HepG2 (cell line): ENCODE measurements at regions of chr18 and their contacts with region 1.

Region 1: GRCh38 chr18:70491734-70492348 is 203.0 kb downstream of the SOCS6 start:
- DNase-seq: peak; percentile 59
- ATAC-seq: peak; percentile 89
- H3K4me3 ChIP-seq: no peak overlapping the region
- H3K27ac ChIP-seq: no peak overlapping the region
- H3K4me1 ChIP-seq: peaks cover 9% of the 10 kb centered on the region
- H3K27me3 ChIP-seq: peaks cover 0 to 3% of the 10 kb centered on the region in 2 experiments; a peak in 2 of 5 replicates
- CTCF ChIP-seq: peak; percentile 72
- EP300 ChIP-seq: no peak
- POLR2A ChIP-seq: no peak
- RAD21 ChIP-seq: no peak

Region 2: GRCh38 chr18:70273021-70273420 is 218.8 kb before region 1 on chr18:
- CTCF ChIA-PET with region 1: no interaction called
- POLR2A ChIA-PET with region 1: no interaction called
- in situ Hi-C with region 1: no loop called
- intact Hi-C with region 1: no loop called
- DNase-seq: no peak
- ATAC-seq: no peak
- H3K4me3 ChIP-seq: no peak overlapping the region
- H3K27ac ChIP-seq: no peak overlapping the region
- H3K4me1 ChIP-seq: no peaks in the 10 kb centered on the region
- H3K27me3 ChIP-seq: peaks cover 0 to 4% of the 10 kb centered on the region in 2 experiments; a peak in 3 of 5 replicates
- CTCF ChIP-seq: no peak
- EP300 ChIP-seq: no peak
- POLR2A ChIP-seq: no peak
- RAD21 ChIP-seq: no peak

Region 3: DNA sequence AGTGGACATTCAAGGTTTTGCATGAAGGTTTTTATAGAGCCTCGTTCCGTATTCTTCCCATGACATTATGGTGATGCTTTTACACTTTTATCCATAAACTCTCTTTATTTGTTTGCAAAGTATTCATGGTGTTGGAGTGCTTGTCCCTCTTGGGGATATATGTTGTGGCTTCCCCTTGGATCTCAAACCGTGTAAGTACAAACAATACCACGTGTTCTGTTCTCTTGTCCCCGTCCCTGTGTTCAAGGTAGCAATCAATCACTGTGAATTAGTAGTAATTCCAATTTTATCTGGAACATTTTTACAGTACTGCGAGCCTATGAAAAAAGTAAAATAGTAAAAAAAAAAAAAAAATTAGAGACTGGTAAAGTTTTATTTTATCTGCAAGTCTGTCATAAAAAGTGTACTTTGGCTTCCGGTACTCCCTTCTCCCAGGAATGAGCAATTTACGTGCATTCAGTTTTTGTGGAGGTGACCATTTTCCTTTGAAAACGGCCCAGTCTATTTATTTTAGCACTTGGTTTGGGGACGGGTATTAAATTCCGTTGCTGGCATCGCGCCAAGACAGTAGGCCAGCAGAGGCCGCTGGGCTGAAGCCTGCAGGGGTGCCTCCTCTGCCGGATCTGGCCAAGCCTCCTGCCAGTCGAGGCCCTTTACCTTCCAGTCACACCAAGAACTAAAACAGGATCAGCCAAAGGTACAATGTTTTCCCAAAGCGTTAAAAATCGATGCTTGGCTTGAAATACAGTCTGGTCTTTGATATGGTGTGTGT is 27.3 kb before region 1 on chr18:
- CTCF ChIA-PET with region 1: no interaction called
- POLR2A ChIA-PET with region 1: no interaction called
- in situ Hi-C with region 1: no loop called
- intact Hi-C with region 1: loop called (anchors 2 kb)
- DNase-seq: peak; percentile 64
- ATAC-seq: peak; percentile 77
- H3K4me3 ChIP-seq: peak overlapping the region; percentile 34 to 46 (median 43)
- H3K27ac ChIP-seq: no peak overlapping the region
- H3K4me1 ChIP-seq: peaks cover 36% of the 10 kb centered on the region
- H3K27me3 ChIP-seq: no peaks in the 10 kb centered on the region
- CTCF ChIP-seq: peak; percentile 59
- EP300 ChIP-seq: no peak
- POLR2A ChIP-seq: no peak
- RAD21 ChIP-seq: 0 out of 2 replicates have a peak, but pooled peaks have one; percentile 28

Region 4: GRCh38 chr18:70513502-70514171 is 21.8 kb after region 1 on chr18:
- CTCF ChIA-PET with region 1: no interaction called
- POLR2A ChIA-PET with region 1: no interaction called
- in situ Hi-C with region 1: no loop called
- intact Hi-C with region 1: no loop called
- DNase-seq: peak; percentile 7
- ATAC-seq: no peak; the same call in 2 of the 3 replicates
- H3K4me3 ChIP-seq: no peak overlapping the region
- H3K27ac ChIP-seq: no peak overlapping the region
- H3K4me1 ChIP-seq: no peaks in the 10 kb centered on the region
- H3K27me3 ChIP-seq: peaks cover 0 to 5% of the 10 kb centered on the region in 2 experiments; a peak in 1 of 5 replicates
- CTCF ChIP-seq: no peak
- EP300 ChIP-seq: no peak
- POLR2A ChIP-seq: no peak
- RAD21 ChIP-seq: no peak

Region 5: GRCh38 chr18:70578480-70578879 is 86.6 kb after region 1 on chr18:
- CTCF ChIA-PET with region 1: no interaction called
- POLR2A ChIA-PET with region 1: no interaction called
- in situ Hi-C with region 1: no loop called
- intact Hi-C with region 1: loop called (anchors 1 kb)
- DNase-seq: peak; percentile 4
- ATAC-seq: peak; percentile 85
- H3K4me3 ChIP-seq: no peak overlapping the region
- H3K27ac ChIP-seq: no peak overlapping the region
- H3K4me1 ChIP-seq: no peaks in the 10 kb centered on the region
- H3K27me3 ChIP-seq: no peaks in the 10 kb centered on the region
- CTCF ChIP-seq: peak; percentile 56
- EP300 ChIP-seq: no peak
- POLR2A ChIP-seq: no peak
- RAD21 ChIP-seq: no peak

Region 6: GRCh38 chr18:71194438-71194837 is 702.6 kb after region 1 on chr18:
- CTCF ChIA-PET with region 1: no interaction called
- POLR2A ChIA-PET with region 1: no interaction called
- in situ Hi-C with region 1: no loop called
- intact Hi-C with region 1: loop called (anchors 5 kb)
- DNase-seq: no peak
- ATAC-seq: no peak
- H3K4me3 ChIP-seq: no peak overlapping the region
- H3K27ac ChIP-seq: no peak overlapping the region
- H3K4me1 ChIP-seq: no peaks in the 10 kb centered on the region
- H3K27me3 ChIP-seq: no peaks in the 10 kb centered on the region
- CTCF ChIP-seq: no peak
- EP300 ChIP-seq: no peak
- POLR2A ChIP-seq: no peak
- RAD21 ChIP-seq: no peak